ENCODE measurements at regions of chr1 and their contacts with region 1.

Region 1: GRCh38 chr1:54488779-54489626 is 59.0 kb upstream of the ACOT11 start:
- DNase-seq: peak; percentile 81 to 84
- ATAC-seq: peak; percentile 73 to 84 (median 82)
- H3K4me3 ChIP-seq: peak overlapping the region; percentile 40 to 75 (median 66)
- H3K27ac ChIP-seq: peak overlapping the region; percentile 76 to 97 (median 93)
- H3K4me1 ChIP-seq: peaks cover 7 to 39% (median 23%) of the 10 kb centered on the region in 9 donors
- H3K27me3 ChIP-seq: no peaks in the 10 kb centered on the region
- CTCF ChIP-seq: peak; percentile 83 to 99 (median 97)

Region 2: GRCh38 chr1:54052934-54053744 is 435.9 kb before region 1 on chr1 and contains the starts of genes TCEANC2 and TMEM59:
- intact Hi-C with region 1: loop called in 2 of 10 experiments (anchors 1 to 5 kb)
- DNase-seq: peak; percentile 96 to 98
- ATAC-seq: peak; percentile 96 to 98 (median 97)
- H3K4me3 ChIP-seq: peak within 1 kb of the TSS; percentile 78 to 93 (median 85)
- H3K27ac ChIP-seq: peak within 1 kb of the TSS; percentile 81 to 98 (median 95)
- H3K4me1 ChIP-seq: peaks cover 9 to 56% (median 49%) of the 10 kb centered on the region in 9 donors
- H3K27me3 ChIP-seq: no peaks in the 10 kb centered on the region
- CTCF ChIP-seq: no peak
- total RNA-seq, gene TCEANC2: 2.3 to 5.9 (median 4.1) TPM
- total RNA-seq, gene TMEM59: 285 to 474 (median 345) TPM

Region 3: DNA sequence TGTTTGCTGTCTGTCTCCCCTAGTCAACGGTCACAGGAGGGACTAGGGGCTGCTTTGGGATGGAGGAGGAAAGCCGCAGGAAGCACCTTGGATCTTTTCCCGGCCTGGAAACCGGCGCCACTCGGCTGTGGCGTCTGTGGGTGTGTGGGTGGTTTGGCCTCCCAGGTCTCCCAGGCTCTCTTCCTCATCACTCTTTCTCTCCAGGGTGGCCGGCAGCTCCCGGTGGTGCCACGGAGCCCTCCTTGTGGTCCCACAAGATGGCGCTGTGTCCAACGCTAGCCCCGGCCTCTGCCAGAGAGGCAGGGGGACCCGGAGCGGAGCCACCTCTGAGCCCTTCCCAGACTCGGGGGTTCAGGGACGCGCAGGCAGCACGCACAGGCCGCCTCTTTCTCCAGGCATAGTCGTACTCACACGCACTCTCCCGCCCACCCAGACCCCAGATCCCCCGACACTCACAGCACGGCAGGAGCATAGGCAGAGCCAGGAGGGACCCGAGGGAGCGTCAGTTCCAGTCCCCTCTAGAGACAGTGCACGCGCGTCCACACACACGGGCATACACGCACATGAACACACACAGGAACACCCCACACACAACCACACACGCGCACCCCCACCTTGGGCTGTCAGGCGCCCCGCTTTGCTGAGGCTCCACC is 367.4 kb before region 1 on chr1:
- intact Hi-C with region 1: loop called (anchors 1 to 5 kb)
- DNase-seq: peak; percentile 79 to 83
- ATAC-seq: peak; percentile 85 to 94 (median 90)
- H3K4me3 ChIP-seq: peak overlapping the region in 8 of 10 donors; percentile 1 to 41 (median 34)
- H3K27ac ChIP-seq: no peak overlapping the region
- H3K4me1 ChIP-seq: peaks cover 0 to 15% (median 10%) of the 10 kb centered on the region in 9 donors
- H3K27me3 ChIP-seq: peaks cover 0 to 13% (median 0%) of the 10 kb centered on the region in 7 donors
- CTCF ChIP-seq: peak; percentile 66 to 89 (median 82)

Region 4: DNA sequence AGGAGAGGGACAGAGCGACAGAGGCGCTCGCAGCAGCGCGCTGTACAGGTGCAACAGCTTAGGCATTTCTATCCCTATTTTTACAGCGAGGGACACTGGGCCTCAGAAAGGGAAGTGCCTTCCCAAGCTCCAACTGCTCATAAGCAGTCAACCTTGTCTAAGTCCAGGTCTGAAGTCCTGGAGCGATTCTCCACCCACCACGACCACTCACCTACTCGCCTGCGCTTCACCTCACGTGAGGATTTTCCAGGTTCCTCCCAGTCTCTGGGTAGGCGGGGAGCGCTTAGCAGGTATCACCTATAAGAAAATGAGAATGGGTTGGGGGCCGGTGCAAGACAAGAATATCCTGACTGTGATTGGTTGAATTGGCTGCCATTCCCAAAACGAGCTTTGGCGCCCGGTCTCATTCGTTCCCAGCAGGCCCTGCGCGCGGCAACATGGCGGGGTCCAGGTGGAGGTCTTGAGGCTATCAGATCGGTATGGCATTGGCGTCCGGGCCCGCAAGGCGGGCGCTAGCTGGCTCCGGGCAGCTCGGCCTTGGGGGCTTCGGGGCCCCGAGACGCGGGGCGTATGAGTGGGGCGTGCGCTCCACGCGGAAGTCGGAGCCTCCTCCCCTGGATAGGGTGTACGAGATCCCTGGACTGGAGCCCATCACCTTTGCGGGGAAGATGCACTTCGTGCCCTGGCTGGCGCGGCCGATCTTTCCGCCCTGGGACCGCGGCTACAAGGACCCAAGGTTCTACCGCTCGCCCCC is 289.1 kb before region 1 on chr1 and contains the starts of genes CYB5RL and MRPL37:
- intact Hi-C with region 1: loop called in 2 of 10 experiments (anchors 1 to 5 kb)
- DNase-seq: peak; percentile 85 to 98
- ATAC-seq: peak; percentile 97 to 100 (median 99)
- H3K4me3 ChIP-seq: peak within 1 kb of the TSS; percentile 68 to 100 (median 84)
- H3K27ac ChIP-seq: peak within 1 kb of the TSS in 9 of 10 donors; percentile 60 to 90 (median 81)
- H3K4me1 ChIP-seq: peaks cover 6 to 32% (median 20%) of the 10 kb centered on the region in 9 donors
- H3K27me3 ChIP-seq: no peaks in the 10 kb centered on the region
- CTCF ChIP-seq: no peak
- total RNA-seq, gene CYB5RL: 3.2 to 8.3 (median 5.8) TPM
- total RNA-seq, gene MRPL37: 82.2 to 97.4 (median 90.2) TPM

Region 5: DNA sequence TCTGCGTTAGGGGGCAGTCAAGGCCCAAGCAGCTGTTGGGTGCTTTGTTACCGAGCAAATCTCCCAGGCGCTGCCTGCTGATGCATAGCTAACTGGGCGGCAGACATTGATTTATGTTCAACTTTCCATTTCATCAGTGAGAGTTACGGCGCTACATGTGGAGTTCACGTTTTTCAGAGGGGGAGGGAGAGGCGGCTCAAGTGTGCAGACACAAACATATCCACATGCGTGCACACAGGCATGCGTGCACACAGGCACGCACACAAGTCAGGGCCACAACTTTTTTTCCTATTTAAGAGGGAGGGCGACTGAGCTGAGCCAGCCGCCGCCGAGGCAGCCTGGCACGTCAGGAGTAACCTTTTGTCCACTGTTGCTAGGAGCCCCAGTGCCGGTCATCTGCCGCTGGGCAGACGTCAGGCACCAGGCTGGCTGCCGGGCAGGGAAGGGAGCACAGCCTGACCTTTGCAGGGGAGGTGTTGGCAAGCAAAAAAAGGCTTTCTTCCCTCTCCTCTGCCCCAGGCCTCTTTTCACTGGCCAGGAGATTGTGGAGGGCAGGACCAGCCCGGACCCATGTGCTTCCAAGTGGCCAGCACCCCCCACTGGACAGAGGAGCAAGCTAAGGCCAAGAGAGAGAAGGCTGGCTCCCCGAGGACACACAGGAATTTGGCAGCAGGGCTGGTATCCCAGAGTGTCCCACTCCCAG is 215.8 kb before region 1 on chr1:
- intact Hi-C with region 1: loop called in 1 of 10 experiments (anchors 5 kb)
- DNase-seq: peak; percentile 43 to 71
- ATAC-seq: peak; percentile 31 to 86 (median 67)
- H3K4me3 ChIP-seq: peak overlapping the region in 3 of 10 donors; percentile 1 to 11 (median 3)
- H3K27ac ChIP-seq: peak overlapping the region; percentile 7 to 91 (median 88)
- H3K4me1 ChIP-seq: peaks cover 49 to 89% (median 69%) of the 10 kb centered on the region in 9 donors
- H3K27me3 ChIP-seq: no peaks in the 10 kb centered on the region
- CTCF ChIP-seq: peak in 5 of 9 donors; percentile 27 to 54 (median 32)

Region 6: GRCh38 chr1:54304518-54304917 is 184.5 kb before region 1 on chr1:
- intact Hi-C with region 1: no loop called
- DNase-seq: no peak
- ATAC-seq: no peak
- H3K4me3 ChIP-seq: no peak overlapping the region
- H3K27ac ChIP-seq: no peak overlapping the region
- H3K4me1 ChIP-seq: peaks cover 5 to 74% (median 43%) of the 10 kb centered on the region in 9 donors
- H3K27me3 ChIP-seq: no peaks in the 10 kb centered on the region
- CTCF ChIP-seq: no peak

Region 7: GRCh38 chr1:54355931-54356679 is 132.9 kb before region 1 on chr1:
- intact Hi-C with region 1: loop called in 1 of 10 experiments (anchors 5 kb)
- DNase-seq: no peak
- ATAC-seq: no peak
- H3K4me3 ChIP-seq: peak overlapping the region in 6 of 10 donors; percentile 3 to 40 (median 16)
- H3K27ac ChIP-seq: peak overlapping the region in 4 of 10 donors; percentile 10 to 48 (median 38)
- H3K4me1 ChIP-seq: peaks cover 17 to 88% (median 62%) of the 10 kb centered on the region in 9 donors
- H3K27me3 ChIP-seq: no peaks in the 10 kb centered on the region
- CTCF ChIP-seq: no peak

Region 8: GRCh38 chr1:54429179-54429520 is 59.9 kb before region 1 on chr1:
- intact Hi-C with region 1: no loop called
- DNase-seq: no peak
- ATAC-seq: no peak
- H3K4me3 ChIP-seq: no peak overlapping the region
- H3K27ac ChIP-seq: no peak overlapping the region
- H3K4me1 ChIP-seq: no peaks in the 10 kb centered on the region
- H3K27me3 ChIP-seq: no peaks in the 10 kb centered on the region
- CTCF ChIP-seq: no peak

Measured in heart right ventricle (tissue), 16 donors.